HCT116 (cell line): ENCODE measurements at regions of chr2 and their contacts with region 1.

Region 1: GRCh38 chr2:201231781-201232466 is 28.4 kb upstream of the CASP8 start:
- DNase-seq: peak; percentile 92
- ATAC-seq: peak; percentile 65
- H3K4me3 ChIP-seq: peak overlapping the region; percentile 74 to 83
- H3K27ac ChIP-seq: peak overlapping the region; percentile 26
- H3K4me1 ChIP-seq: peaks cover 15 to 22% of the 10 kb centered on the region in 2 experiments
- H3K27me3 ChIP-seq: no peaks in the 10 kb centered on the region
- CTCF ChIP-seq: peak; percentile 91 to 94 (median 91)
- POLR2A ChIP-seq: peak; percentile 66
- RAD21 ChIP-seq: peak; percentile 94

Region 2: DNA sequence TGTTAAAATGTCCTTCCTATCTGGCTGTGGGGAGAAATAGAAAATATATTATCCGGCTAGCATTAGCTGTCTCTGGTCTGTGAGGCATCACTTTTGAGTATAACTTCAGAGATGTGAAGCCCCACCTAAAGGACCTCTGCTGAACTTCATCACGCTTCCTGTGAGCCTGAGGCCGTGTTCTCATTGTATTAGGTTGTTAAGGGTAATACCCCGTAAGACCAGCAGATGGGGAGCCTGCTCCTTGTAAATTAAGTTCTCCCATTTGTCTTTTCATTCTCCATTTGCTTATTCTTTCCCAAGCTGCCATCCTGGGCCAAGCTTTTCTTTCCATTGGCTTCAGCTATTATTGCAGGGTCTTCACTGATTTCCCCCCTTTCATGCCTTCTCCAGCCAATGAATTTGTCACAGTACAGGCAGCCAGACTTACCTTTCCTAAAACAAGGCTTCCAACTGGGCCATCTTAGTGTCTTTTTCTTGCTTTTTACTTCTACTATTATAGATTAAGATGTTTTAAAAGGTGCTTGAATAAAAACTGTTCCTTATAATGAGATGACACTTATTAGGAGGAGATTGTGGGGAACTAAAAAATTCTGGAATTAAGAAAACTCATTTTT is 330.4 kb before region 1 on chr2:
- CTCF ChIA-PET with region 1: interaction called, 22 read pairs
- POLR2A ChIA-PET with region 1: no interaction called
- RAD21 ChIA-PET with region 1: interaction called, 3 to 8 read pairs
- intact Hi-C with region 1: loop called (anchors 1 kb)
- DNase-seq: peak; percentile 87
- ATAC-seq: peak; percentile 92
- H3K4me3 ChIP-seq: no peak overlapping the region
- H3K27ac ChIP-seq: no peak overlapping the region
- H3K4me1 ChIP-seq: peaks cover 0 to 5% of the 10 kb centered on the region in 2 experiments; a peak in 1 of 4 replicates
- H3K27me3 ChIP-seq: no peaks in the 10 kb centered on the region
- CTCF ChIP-seq: peak; percentile 73 to 97 (median 85)
- POLR2A ChIP-seq: no peak
- RAD21 ChIP-seq: peak; percentile 89

Region 3: GRCh38 chr2:201040867-201041628 is 190.9 kb before region 1 on chr2:
- CTCF ChIA-PET with region 1: no interaction called
- POLR2A ChIA-PET with region 1: no interaction called
- RAD21 ChIA-PET with region 1: no interaction called
- intact Hi-C with region 1: no loop called
- DNase-seq: no peak
- ATAC-seq: no peak
- H3K4me3 ChIP-seq: no peak overlapping the region
- H3K27ac ChIP-seq: no peak overlapping the region
- H3K4me1 ChIP-seq: no peaks in the 10 kb centered on the region
- H3K27me3 ChIP-seq: no peaks in the 10 kb centered on the region
- CTCF ChIP-seq: no peak
- POLR2A ChIP-seq: no peak
- RAD21 ChIP-seq: no peak

Region 4: DNA sequence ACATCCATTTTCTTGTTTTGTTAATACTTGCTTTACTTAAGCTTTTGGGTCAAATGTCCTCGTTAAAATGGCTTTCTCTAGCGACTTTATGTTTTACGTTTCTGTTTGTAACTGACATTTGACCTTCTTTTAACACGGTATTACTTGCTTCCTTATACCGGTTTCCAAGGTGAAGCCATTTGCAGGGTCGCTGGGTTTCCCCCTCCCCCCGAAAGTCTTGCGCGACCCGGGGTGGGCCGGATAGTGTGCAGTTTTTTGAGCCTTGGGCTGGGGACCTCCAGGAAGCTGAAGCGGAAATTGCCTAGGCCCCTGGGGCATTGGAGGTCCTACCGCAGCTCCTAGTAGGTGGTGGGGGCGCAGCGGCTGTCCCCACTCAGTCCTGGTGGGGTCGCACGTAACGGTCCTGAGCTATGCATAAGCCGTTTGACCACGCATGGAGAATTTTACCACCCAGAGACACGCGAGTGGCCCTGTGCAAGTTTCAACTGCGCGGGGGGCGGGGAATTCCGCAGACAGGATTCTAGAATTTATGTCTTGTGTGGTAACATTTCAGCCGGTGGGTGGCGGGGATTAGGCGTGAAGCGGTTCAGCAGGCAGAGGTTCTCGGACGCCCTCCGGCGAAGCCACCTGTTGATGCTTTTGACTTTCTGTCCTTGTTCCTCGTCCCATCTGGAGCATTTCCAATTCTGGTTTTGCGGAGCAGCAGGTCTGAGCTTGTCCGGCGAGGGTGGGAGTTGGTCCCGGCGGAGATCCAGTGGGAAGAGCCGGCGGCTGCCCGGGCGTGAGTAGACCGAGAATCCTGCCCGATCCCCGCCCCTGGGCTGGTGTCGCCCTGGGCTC is 113.6 kb before region 1 on chr2:
- CTCF ChIA-PET with region 1: no interaction called
- POLR2A ChIA-PET with region 1: interaction called, 7 read pairs
- RAD21 ChIA-PET with region 1: no interaction called
- intact Hi-C with region 1: loop called (anchors 1 kb)
- DNase-seq: peak; percentile 86
- ATAC-seq: peak; percentile 66
- H3K4me3 ChIP-seq: peak overlapping the region; percentile 81
- H3K27ac ChIP-seq: peak overlapping the region; percentile 96
- H3K4me1 ChIP-seq: peaks cover 18 to 75% of the 10 kb centered on the region in 2 experiments
- H3K27me3 ChIP-seq: no peaks in the 10 kb centered on the region
- CTCF ChIP-seq: peak; percentile 50 to 93 (median 57); a peak in 5 of 6 replicates
- POLR2A ChIP-seq: no peak
- RAD21 ChIP-seq: peak; percentile 70

Region 5: DNA sequence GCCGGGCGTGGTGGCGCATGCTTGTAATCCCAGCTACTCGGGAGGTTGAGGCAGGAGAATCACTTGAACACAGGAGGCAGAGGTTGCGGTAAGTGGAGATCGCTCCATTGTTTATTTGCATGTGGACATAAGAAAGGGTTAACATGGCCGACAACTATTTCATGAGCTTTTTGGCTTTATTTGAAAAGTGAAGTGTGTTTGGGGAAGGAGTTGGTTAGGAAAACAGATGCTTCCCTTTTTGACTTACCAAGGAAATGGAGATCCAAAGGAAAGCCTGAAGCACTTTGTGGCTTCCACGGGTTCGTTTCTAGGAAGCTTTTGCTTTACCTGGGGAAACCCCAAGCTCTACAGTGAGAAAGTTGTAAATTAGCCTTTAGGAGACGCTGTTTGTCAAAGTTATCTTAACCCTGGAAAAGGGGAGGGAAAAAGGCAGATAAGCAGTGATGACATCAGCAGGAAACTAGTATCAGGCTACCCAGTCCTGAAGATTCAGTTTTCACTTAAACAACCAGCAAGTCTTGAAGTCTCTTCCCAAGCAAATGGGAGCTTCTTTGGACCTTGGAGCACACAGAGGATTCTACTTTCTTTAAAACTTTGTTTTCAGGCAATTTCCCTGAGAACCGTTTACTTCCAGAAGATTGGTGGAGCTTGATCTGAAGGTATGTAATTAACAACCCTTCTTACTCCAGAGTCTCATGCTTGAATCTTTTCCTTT is 49.1 kb before region 1 on chr2 and contains the start of gene CASP10:
- CTCF ChIA-PET with region 1: interaction called, 59 read pairs
- POLR2A ChIA-PET with region 1: interaction called, 13 read pairs
- RAD21 ChIA-PET with region 1: interaction called, 5 to 8 read pairs
- intact Hi-C with region 1: loop called (anchors 2 kb)
- DNase-seq: peak; percentile 53
- ATAC-seq: peak; percentile 85
- H3K4me3 ChIP-seq: peak within 1 kb of the TSS; percentile 16 to 39
- H3K27ac ChIP-seq: no peak within 1 kb of the TSS
- H3K4me1 ChIP-seq: peaks cover 0 to 13% of the 10 kb centered on the region in 2 experiments; a peak in 2 of 4 replicates
- H3K27me3 ChIP-seq: no peaks in the 10 kb centered on the region
- CTCF ChIP-seq: peak; percentile 28 to 63 (median 51); a peak in 4 of 6 replicates
- POLR2A ChIP-seq: peak; percentile 33
- RAD21 ChIP-seq: peak; percentile 82
- total RNA-seq, gene CASP10: 2.6 TPM

Region 6: GRCh38 chr2:201257956-201258665 is 26.2 kb after region 1 on chr2:
- CTCF ChIA-PET with region 1: interaction called, 4 read pairs
- POLR2A ChIA-PET with region 1: interaction called, 11 read pairs
- RAD21 ChIA-PET with region 1: no interaction called
- intact Hi-C with region 1: no loop called
- DNase-seq: peak; percentile 68
- ATAC-seq: peak; percentile 75
- H3K4me3 ChIP-seq: peak overlapping the region; percentile 61 to 64
- H3K27ac ChIP-seq: peak overlapping the region; percentile 76
- H3K4me1 ChIP-seq: peaks cover 23 to 55% of the 10 kb centered on the region in 2 experiments
- H3K27me3 ChIP-seq: no peaks in the 10 kb centered on the region
- CTCF ChIP-seq: 0 out of 6 replicates have a peak, but pooled peaks of 1 of the 3 experiments have one; percentile 1
- POLR2A ChIP-seq: peak; percentile 54
- RAD21 ChIP-seq: peak; percentile 30

Region 7: GRCh38 chr2:201451292-201452057 is 219.6 kb after region 1 on chr2 and contains the starts of genes STRADB and TRAK2:
- CTCF ChIA-PET with region 1: interaction called, 4 read pairs
- POLR2A ChIA-PET with region 1: interaction called, 3 read pairs
- RAD21 ChIA-PET with region 1: interaction called in 1 of 2 experiments, 3 read pairs
- intact Hi-C with region 1: loop called (anchors 10 kb)
- DNase-seq: peak; percentile 88
- ATAC-seq: peak; percentile 92
- H3K4me3 ChIP-seq: peak within 1 kb of the TSS; percentile 98
- H3K27ac ChIP-seq: peak within 1 kb of the TSS; percentile 69
- H3K4me1 ChIP-seq: peaks cover 10 to 22% of the 10 kb centered on the region in 2 experiments
- H3K27me3 ChIP-seq: no peaks in the 10 kb centered on the region
- CTCF ChIP-seq: peak in 1 of 3 experiments; percentile 17; a peak in 1 of 6 replicates
- POLR2A ChIP-seq: peak; percentile 79
- RAD21 ChIP-seq: peak; percentile 8; the same call in 1 of the 2 replicates
- total RNA-seq, gene STRADB: 17.4 TPM
- total RNA-seq, gene TRAK2: 15.2 TPM

Region 8: GRCh38 chr2:201680743-201681142 is 448.8 kb after region 1 on chr2:
- CTCF ChIA-PET with region 1: no interaction called
- POLR2A ChIA-PET with region 1: no interaction called
- RAD21 ChIA-PET with region 1: no interaction called
- intact Hi-C with region 1: loop called (anchors 2 kb)
- DNase-seq: peak; percentile 60
- ATAC-seq: peak; percentile 100
- H3K4me3 ChIP-seq: no peak overlapping the region
- H3K27ac ChIP-seq: no peak overlapping the region
- H3K4me1 ChIP-seq: no peaks in the 10 kb centered on the region
- H3K27me3 ChIP-seq: no peaks in the 10 kb centered on the region
- CTCF ChIP-seq: peak; percentile 84 to 85 (median 85)
- POLR2A ChIP-seq: no peak
- RAD21 ChIP-seq: peak; percentile 51